HAP-1 (cell line): ENCODE measurements at regions of chr4 and their contacts with region 1.

Region 1: DNA sequence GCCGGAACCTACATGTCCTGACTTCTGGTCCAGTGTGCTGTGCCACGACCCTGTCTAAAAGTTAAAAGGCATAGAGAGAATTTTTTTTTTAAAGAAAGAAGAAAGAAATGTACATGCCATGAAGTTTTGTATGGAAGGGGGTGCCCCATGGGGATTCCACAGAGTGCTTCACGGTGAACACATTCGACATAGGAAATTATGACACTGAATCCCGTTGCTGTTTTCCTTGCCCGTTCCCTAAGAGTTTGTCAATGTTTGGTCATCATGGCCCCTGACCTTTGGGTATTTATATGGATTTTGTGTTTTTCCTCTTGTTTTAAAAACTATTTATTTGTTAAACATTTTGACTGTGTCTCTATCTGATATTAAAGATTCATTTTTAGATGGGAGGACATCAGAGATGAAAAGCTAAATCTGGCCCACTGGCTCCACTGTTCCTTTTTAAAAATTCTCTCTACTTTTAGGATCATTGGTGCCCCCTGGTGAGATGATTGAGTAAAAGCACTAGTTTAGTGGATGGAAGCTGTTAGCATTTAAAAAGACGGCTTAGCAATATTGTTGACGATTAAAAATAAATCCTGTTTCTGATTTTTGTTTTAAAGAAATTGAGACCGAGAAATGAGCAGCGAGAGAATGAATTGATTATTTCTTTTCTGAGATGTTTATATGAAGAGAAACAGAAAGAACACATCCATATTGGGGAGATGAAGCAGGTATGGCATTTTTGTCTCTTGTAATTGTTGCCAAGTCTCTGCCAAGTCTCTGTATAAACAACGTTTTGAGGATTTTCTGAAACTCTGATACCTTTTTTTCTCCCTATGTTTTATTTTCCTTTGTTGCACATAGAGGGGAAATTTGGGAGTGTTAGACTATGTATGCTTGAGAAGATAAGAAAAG is 75.0 kb downstream of the PTTG2 start:
- DNase-seq: peak; percentile 65 to 68
- H3K4me3 ChIP-seq: no peak overlapping the region
- H3K4me1 ChIP-seq: peaks cover 7% of the 10 kb centered on the region
- H3K27me3 ChIP-seq: no peaks in the 10 kb centered on the region

Region 2: GRCh38 chr4:37603070-37603468 is 432.2 kb before region 1 on chr4:
- in situ Hi-C with region 1: loop called (anchors 25 kb)
- DNase-seq: peak; percentile 26 to 86
- H3K4me3 ChIP-seq: no peak overlapping the region
- H3K4me1 ChIP-seq: peaks cover 10% of the 10 kb centered on the region
- H3K27me3 ChIP-seq: no peaks in the 10 kb centered on the region

Region 3: DNA sequence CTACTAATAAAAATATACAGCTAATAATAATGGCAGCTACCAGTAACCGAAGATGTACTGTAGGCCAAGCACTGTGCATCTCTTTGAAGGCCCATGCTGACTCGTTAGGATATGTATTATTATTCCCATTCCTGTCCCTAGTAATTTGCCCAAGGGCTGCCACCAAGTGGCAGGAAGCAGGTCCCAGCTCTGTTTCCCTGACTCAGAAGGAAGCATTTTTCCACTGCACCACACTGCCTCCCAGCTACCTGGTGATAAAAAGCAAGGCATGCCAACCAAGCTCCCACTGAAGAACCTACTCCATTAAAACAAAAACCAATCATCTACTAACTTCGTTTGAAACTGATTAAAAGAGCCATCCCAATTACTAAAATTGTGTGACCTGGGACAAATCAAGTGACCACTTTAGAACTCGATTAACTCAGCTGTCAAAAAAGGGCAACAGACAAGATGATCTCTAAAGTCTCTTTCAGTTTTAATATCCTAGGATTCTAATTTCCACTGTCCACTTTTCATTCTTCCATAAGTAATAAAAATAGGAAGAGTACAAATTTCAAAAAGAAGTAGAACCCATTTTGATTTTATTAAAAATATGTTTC is 233.1 kb before region 1 on chr4:
- in situ Hi-C with region 1: loop called (anchors 10 kb)
- DNase-seq: peak; percentile 77 to 83
- H3K4me3 ChIP-seq: no peak overlapping the region
- H3K4me1 ChIP-seq: peaks cover 2% of the 10 kb centered on the region
- H3K27me3 ChIP-seq: no peaks in the 10 kb centered on the region